ENCODE measurements at regions of chr7 and their contacts with region 1.

Region 1: GRCh38 chr7:195001-195829 is 2.8 kb downstream of the FAM20C start:
- DNase-seq: no peak

Region 2: GRCh38 chr7:218316-218715 is 23.1 kb after region 1 on chr7:
- intact Hi-C with region 1: loop called in 1 of 2 experiments (anchors 1 kb)
- DNase-seq: no peak

Region 3: DNA sequence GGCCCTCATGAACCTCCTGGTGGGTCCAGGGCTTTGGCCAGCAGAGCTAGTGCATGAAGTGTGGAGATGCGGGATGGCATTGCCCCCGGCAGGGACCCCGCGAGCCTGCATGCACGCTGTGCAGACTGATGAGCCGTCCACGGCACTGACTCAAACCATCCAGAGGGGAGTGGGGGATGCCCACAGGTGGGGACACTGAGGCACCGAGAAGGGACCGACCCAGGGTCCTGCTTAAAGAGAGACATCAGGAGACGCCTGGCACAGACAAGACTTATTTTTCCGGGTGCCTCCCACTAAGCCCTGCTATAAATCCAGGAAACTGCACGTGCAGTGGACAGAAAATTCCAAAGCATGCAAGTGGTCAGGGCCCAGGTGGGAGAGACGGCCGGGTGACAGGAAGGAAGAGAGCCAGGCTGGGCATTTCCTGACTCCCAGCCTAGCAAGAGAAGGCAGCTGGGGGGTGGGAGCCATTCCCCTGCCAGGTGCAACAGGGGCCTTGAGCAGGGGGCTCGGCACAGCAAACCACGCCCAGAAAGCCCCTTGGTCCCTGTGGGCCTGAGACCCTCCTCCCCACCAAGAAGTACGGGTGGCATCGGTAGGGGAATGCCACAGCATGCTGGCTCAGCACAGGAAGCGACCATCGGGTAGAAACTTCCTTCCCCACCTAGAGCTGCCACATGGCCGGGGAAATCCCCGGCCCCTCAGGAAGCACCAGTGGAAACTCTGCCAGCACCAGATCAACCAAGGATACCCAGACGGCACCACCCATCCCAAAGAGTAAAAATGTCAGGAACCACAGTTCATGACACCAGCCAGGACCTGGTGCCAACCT is 186.2 kb after region 1 on chr7:
- intact Hi-C with region 1: no loop called
- DNase-seq: peak; percentile 43

Measured in posterior vena cava (tissue), 2 donors.